ENCODE measurements at regions of chr14 and their contacts with region 1.

Region 1: GRCh38 chr14:89973234-89973823 is 17.6 kb downstream of the TDP1 start:
- DNase-seq: peak in 1 of 2 experiments; percentile 77
- H3K4me3 ChIP-seq: no peak overlapping the region
- H3K27ac ChIP-seq: no peak overlapping the region
- H3K4me1 ChIP-seq: no peaks in the 10 kb centered on the region
- H3K27me3 ChIP-seq: no peaks in the 10 kb centered on the region; a peak in 1 of 7 replicates
- CTCF ChIP-seq: peak; percentile 59 to 93 (median 82)
- EP300 ChIP-seq: no peak
- POLR2A ChIP-seq: no peak
- RAD21 ChIP-seq: peak; percentile 74 to 75

Region 2: DNA sequence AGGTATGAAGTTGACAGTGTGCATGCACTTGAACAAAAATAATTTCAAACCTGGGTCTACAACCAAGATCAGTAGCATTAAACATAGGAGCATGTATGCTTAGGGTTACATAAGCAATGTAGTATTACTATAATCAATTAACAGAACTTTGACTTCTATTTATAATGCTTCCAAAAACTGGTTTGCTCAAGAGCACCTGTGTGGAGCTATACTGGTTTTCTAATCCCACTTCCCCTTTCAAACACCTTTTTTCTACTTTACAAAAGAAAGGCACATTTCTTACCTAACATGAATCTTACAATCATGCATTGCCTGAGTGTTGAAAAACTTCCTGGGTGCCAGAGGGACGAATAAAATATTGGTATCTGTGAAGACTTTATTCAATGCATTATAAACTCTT is 91.5 kb before region 1 on chr14:
- CTCF ChIA-PET with region 1: no interaction called
- POLR2A ChIA-PET with region 1: no interaction called
- DNase-seq: no peak
- H3K4me3 ChIP-seq: no peak overlapping the region
- H3K27ac ChIP-seq: no peak overlapping the region
- H3K4me1 ChIP-seq: no peaks in the 10 kb centered on the region
- H3K27me3 ChIP-seq: no peaks in the 10 kb centered on the region
- CTCF ChIP-seq: no peak
- EP300 ChIP-seq: no peak
- POLR2A ChIP-seq: no peak
- RAD21 ChIP-seq: no peak

Region 3: GRCh38 chr14:89936658-89937185 is 36.6 kb before region 1 on chr14:
- CTCF ChIA-PET with region 1: interaction called, 42 read pairs
- POLR2A ChIA-PET with region 1: no interaction called
- DNase-seq: no peak
- H3K4me3 ChIP-seq: no peak overlapping the region
- H3K27ac ChIP-seq: no peak overlapping the region
- H3K4me1 ChIP-seq: peaks cover 0 to 9% (median 0%) of the 10 kb centered on the region in 4 experiments; a peak in 1 of 7 replicates
- H3K27me3 ChIP-seq: no peaks in the 10 kb centered on the region
- CTCF ChIP-seq: no peak
- EP300 ChIP-seq: no peak
- POLR2A ChIP-seq: no peak
- RAD21 ChIP-seq: no peak

Region 4: DNA sequence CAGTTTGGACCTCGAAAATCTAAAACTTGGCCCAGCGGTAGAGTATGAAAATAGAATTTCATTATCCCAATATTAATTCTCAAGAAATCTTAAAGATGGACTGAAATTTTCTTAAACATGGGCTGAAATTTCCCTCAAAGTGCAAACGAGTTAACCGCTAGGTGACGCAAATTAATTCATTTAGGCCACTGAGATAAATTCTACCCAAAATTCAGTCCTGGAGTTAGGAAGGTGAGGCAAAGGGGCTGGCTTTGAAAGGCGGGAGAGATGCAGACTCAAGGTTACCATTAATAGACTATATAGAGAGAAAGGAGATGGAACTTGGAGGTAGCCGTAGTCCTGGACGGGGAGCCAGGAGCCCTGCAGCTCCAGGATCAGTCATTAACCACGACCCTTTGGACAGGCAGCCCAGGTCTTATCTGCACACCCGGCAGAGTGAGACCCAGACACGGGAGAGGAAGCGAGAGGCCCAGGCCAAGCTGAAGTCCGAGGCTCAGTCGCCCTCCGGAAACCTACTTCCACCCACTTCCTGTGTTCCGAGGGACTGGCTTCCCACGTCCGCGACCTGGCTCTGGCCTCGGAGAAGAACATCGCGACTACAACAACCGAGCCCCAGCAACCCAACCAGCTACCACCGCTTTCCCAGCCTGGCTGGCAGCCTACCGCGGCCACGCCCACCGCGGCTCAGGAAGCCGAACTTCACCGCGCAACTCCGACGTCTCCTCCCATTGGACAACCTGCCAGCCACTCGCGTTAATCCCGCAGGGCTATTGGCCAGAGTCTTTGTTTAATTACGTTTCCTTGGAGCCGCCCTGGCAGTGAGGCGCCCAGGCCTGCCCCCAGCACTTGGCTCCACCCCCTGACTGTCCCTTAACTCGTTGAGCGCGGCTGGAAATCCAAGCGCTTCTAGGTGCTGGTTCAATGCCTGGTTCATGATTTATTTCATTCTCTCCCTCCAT is 19.0 kb before region 1 on chr14 and contains the start of gene EFCAB11:
- CTCF ChIA-PET with region 1: interaction called, 19 read pairs
- POLR2A ChIA-PET with region 1: interaction called, 5 read pairs
- DNase-seq: peak; percentile 93 to 96
- H3K4me3 ChIP-seq: peak within 1 kb of the TSS; percentile 80 to 92 (median 86)
- H3K27ac ChIP-seq: peak within 1 kb of the TSS; percentile 73
- H3K4me1 ChIP-seq: peaks cover 0 to 3% (median under 1%) of the 10 kb centered on the region in 4 experiments; a peak in 3 of 7 replicates
- H3K27me3 ChIP-seq: no peaks in the 10 kb centered on the region
- CTCF ChIP-seq: peak in 2 of 3 experiments; percentile 2 to 18; a peak in 1 of 4 replicates
- EP300 ChIP-seq: no peak
- POLR2A ChIP-seq: peak; percentile 55 to 82
- RAD21 ChIP-seq: no peak
- total RNA-seq, gene EFCAB11: 12.8 and 15.4 TPM in 2 replicates

Region 5: DNA sequence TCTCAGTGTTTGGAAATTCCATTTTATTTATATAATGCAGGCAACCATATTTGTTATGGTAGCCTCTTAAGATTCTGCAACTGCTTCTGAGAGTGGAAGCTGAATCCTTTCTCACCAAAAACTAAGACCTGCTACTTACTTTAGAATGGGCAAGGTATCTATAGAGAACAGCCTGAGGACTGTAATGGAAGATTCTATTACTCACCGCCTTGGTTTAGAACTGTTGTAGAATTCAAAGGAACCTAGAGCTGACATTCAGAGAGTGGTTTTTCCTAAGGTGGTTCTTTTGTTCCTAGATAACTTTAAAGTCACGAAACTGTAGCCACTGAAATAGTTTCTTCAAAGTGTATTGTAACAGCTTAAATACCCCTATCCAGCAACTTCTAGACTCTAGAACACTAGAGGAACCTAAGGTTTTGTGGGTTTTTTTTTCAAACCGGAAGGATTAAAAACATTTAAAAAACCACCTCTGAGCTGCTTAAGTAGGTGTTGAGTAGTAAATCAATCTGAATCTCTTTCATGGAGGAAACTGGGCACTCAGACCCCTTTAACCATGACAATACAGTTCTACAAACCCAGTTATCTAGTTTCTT is 13.4 kb before region 1 on chr14:
- CTCF ChIA-PET with region 1: interaction called, 19 read pairs
- POLR2A ChIA-PET with region 1: interaction called, 5 read pairs
- DNase-seq: no peak
- H3K4me3 ChIP-seq: no peak overlapping the region
- H3K27ac ChIP-seq: no peak overlapping the region
- H3K4me1 ChIP-seq: peaks cover 0 to 10% (median 2%) of the 10 kb centered on the region in 4 experiments; a peak in 4 of 7 replicates
- H3K27me3 ChIP-seq: no peaks in the 10 kb centered on the region
- CTCF ChIP-seq: no peak
- EP300 ChIP-seq: no peak
- POLR2A ChIP-seq: no peak
- RAD21 ChIP-seq: no peak

Region 6: DNA sequence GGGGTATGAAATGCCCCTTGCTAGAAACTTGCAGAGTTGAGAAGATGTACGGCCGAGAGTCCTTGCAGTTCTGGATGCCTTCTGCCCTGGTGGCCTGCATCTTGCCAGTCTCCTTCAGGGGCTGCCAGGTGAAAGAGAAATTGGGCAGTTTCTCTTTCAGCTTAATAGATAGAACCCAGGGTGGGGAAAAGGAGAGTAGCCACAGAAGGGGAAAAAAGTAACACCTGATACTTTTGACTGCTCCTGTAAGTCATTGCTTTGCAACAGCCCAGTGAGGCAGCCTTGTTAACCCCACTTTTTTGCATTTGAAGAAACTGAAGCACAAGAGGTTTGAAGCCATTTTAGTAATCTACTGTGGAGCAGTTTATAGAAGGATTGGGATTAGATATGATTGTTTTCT is 10.0 kb after region 1 on chr14:
- CTCF ChIA-PET with region 1: interaction called, 37 read pairs
- POLR2A ChIA-PET with region 1: interaction called, 4 read pairs
- DNase-seq: no peak
- H3K4me3 ChIP-seq: no peak overlapping the region
- H3K27ac ChIP-seq: no peak overlapping the region
- H3K4me1 ChIP-seq: peaks cover 0 to 3% (median 1%) of the 10 kb centered on the region in 4 experiments; a peak in 4 of 7 replicates
- H3K27me3 ChIP-seq: no peaks in the 10 kb centered on the region
- CTCF ChIP-seq: no peak
- EP300 ChIP-seq: no peak
- POLR2A ChIP-seq: no peak
- RAD21 ChIP-seq: no peak

Region 7: DNA sequence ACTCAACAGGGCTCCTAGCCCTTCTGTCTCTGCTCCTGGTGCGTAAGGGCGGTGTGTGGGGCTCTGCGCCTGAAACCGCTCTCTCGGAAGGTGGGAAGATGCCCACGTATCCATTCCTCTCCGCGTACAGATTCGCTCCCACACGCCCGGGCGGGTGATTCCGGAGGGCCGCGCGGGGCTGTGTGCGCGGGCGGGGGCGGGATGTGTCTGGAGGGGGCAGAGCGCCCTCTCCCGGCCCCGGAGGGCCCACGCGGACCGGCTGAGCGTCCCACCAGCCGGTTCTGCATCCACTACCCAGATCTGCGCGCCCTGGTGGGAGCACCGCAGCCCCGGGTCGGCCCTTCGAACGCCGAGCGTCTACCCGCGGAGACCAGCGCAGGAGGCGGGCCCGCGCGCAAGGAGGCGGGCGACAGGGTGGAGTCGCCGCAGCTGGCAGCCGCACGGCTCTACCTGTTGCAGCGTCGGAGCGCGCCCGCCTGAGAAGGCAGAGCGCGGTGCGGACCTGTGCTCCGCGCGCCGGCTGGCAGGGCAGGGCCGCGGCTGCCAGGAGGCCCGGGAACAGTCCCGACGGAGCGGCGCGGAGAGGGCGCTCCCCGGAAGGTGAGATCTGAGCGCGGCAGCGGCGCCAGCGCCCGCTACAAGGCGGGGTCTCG is 87.1 kb after region 1 on chr14:
- CTCF ChIA-PET with region 1: interaction called, 11 read pairs
- POLR2A ChIA-PET with region 1: no interaction called
- DNase-seq: peak; percentile 44 to 85
- H3K4me3 ChIP-seq: peak overlapping the region; percentile 52 to 73 (median 59)
- H3K27ac ChIP-seq: no peak overlapping the region
- H3K4me1 ChIP-seq: peaks cover 3 to 14% (median 6%) of the 10 kb centered on the region in 4 experiments; a peak in 6 of 7 replicates
- H3K27me3 ChIP-seq: peaks cover 28 to 58% (median 52%) of the 10 kb centered on the region in 4 experiments
- CTCF ChIP-seq: peak; percentile 56 to 69 (median 58)
- EP300 ChIP-seq: no peak
- POLR2A ChIP-seq: no peak
- RAD21 ChIP-seq: peak; percentile 53 to 65

Region 8: GRCh38 chr14:90235179-90235976 is 262.0 kb after region 1 on chr14:
- CTCF ChIA-PET with region 1: interaction called, 52 read pairs
- POLR2A ChIA-PET with region 1: no interaction called
- DNase-seq: peak; percentile 77 to 95
- H3K4me3 ChIP-seq: no peak overlapping the region; a peak in 2 of 8 replicates
- H3K27ac ChIP-seq: no peak overlapping the region
- H3K4me1 ChIP-seq: no peaks in the 10 kb centered on the region; a peak in 1 of 7 replicates
- H3K27me3 ChIP-seq: peaks cover 4 to 11% (median 7%) of the 10 kb centered on the region in 4 experiments
- CTCF ChIP-seq: peak; percentile 77 to 90 (median 87)
- EP300 ChIP-seq: no peak
- POLR2A ChIP-seq: no peak
- RAD21 ChIP-seq: peak; percentile 94 to 95

Measured in H1 (cell line).